SK-N-SH (cell line): ENCODE measurements at regions of chr3 and their contacts with region 1.

Region 1: DNA sequence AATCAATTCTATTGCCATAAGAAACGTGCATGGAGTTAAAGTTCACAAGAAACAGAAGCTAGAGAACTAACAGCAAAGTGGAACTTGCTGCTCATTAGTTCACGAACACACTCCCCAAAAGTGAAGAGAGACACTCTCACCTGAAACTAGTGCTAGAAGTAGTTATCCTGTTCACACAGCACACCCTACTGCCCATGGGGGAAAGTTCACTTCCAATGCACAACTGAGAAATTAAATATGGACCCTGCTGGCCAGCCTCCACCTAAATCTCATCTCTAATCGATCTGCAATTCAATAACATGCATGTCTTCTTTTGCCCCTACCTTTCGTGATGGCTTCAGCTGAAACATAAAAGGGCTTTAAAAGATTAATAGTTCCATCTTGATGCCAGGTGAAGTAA is 39.4 kb upstream of the FRMD4B start:
- DNase-seq: peak; percentile 29
- H3K4me3 ChIP-seq: no peak overlapping the region
- H3K27ac ChIP-seq: no peak overlapping the region
- H3K4me1 ChIP-seq: peaks cover 12 to 23% of the 10 kb centered on the region in 2 experiments; a peak in 3 of 4 replicates
- H3K27me3 ChIP-seq: no peaks in the 10 kb centered on the region
- CTCF ChIP-seq: peak; percentile 82
- EP300 ChIP-seq: no peak
- RAD21 ChIP-seq: peak; percentile 81

Region 2: GRCh38 chr3:69439643-69440270 is 14.5 kb after region 1 on chr3:
- CTCF ChIA-PET with region 1: interaction called, 11 read pairs
- POLR2A ChIA-PET with region 1: no interaction called
- DNase-seq: no peak
- H3K4me3 ChIP-seq: no peak overlapping the region; a peak in 1 of 4 replicates
- H3K27ac ChIP-seq: no peak overlapping the region
- H3K4me1 ChIP-seq: no peaks in the 10 kb centered on the region
- H3K27me3 ChIP-seq: no peaks in the 10 kb centered on the region
- CTCF ChIP-seq: peak; percentile 77
- EP300 ChIP-seq: no peak
- RAD21 ChIP-seq: peak; percentile 50

Region 3: GRCh38 chr3:69484507-69485393 is 59.5 kb after region 1 on chr3:
- CTCF ChIA-PET with region 1: no interaction called
- POLR2A ChIA-PET with region 1: no interaction called
- DNase-seq: no peak
- H3K4me3 ChIP-seq: no peak overlapping the region
- H3K27ac ChIP-seq: no peak overlapping the region
- H3K4me1 ChIP-seq: no peaks in the 10 kb centered on the region; a peak in 1 of 4 replicates
- H3K27me3 ChIP-seq: no peaks in the 10 kb centered on the region
- CTCF ChIP-seq: no peak
- EP300 ChIP-seq: no peak
- RAD21 ChIP-seq: no peak

Region 4: DNA sequence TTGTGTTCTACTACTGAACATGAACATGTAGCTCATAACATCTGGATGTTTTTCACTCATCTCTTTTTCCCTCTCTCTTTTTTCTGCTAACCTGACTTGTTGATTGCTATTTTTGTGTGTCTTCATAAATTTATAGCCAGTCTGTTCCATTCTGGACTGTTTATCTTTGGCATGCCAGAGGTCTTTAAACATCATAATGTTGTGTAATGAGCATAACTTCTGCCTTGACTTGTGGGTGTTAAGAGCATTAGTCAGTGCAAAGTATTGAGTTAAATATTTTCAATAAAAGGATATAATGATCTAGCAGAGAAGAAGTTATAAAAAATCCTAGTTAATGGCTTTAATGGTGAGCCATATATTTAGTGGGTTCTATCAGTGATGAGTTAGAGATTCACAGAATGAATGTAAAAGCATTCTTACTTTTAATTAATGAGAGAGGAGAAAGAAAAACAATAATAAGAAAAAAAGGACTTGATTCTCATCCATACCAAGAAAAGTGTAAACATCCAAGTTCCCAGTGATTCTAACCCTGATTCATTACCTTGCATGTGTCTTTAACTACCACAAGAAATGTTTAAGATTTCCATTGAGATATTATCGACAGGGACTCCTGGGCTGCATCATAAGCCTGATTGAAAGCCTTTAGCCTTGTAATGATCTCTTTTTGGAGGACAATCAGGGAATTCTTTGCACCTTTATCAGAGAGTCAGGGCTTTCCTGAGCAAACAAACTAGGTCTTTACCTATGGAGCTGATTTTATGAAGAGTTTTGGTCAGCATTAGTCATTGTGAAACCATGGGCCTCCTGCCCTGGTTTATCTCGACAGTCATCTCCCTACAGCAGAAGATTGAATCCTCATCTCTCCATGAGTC is 336.9 kb after region 1 on chr3:
- CTCF ChIA-PET with region 1: no interaction called
- POLR2A ChIA-PET with region 1: no interaction called
- DNase-seq: no peak
- H3K4me3 ChIP-seq: no peak overlapping the region
- H3K27ac ChIP-seq: peak overlapping the region in 1 of 2 experiments; percentile 56; a peak in 2 of 4 replicates
- H3K4me1 ChIP-seq: peaks cover 3 to 17% of the 10 kb centered on the region in 2 experiments; a peak in 3 of 4 replicates
- H3K27me3 ChIP-seq: no peaks in the 10 kb centered on the region
- CTCF ChIP-seq: no peak
- EP300 ChIP-seq: peak in 1 of 2 experiments; percentile 45; a peak in 1 of 4 replicates
- RAD21 ChIP-seq: no peak